ENCODE measurements at regions of chr5 and their contacts with region 1.

Region 1: GRCh38 chr5:64784451-64785025 is 15.8 kb downstream of the CWC27 start:
- DNase-seq: no peak
- H3K4me3 ChIP-seq: no peak overlapping the region
- H3K27ac ChIP-seq: no peak overlapping the region
- H3K4me1 ChIP-seq: peaks cover 0 to 6% (median 0%) of the 10 kb centered on the region in 4 donors
- H3K27me3 ChIP-seq: no peaks in the 10 kb centered on the region
- CTCF ChIP-seq: peak; percentile 72 to 78 (median 77)
- EP300 ChIP-seq: no peak
- POLR2A ChIP-seq: no peak

Region 2: DNA sequence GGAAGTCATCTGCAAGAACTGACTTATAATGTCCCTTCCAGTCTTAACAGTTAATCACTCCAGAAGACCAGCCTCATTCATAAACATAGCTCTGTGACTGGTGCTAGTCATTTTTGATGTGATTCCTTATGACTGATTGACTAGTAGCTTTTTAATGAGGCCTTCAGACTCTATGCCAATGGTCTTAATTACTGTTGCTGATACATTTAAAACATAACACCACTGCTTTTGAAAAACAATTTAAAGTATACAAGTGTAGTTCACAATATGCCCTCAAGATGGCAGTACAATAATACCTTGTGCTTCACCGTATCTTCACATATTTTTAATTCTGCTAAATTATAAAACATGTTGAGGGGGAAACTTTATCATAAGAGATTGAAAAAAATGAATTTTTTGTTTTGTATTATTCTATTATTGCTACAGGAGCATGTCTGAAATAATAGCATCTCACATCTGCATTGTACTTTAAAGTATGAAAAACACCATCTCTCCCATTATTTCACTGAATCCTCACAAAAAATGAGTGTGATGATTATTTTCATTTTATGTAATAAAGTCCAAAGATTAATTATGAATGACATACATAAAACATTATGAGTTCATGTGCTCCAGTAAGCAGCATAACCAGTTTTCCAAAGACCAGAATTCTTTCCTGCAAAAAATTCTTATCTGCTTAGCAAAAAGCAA is 149.4 kb before region 1 on chr5:
- intact Hi-C with region 1: loop called (anchors 2 kb)
- DNase-seq: no peak
- H3K4me3 ChIP-seq: no peak overlapping the region
- H3K27ac ChIP-seq: no peak overlapping the region
- H3K4me1 ChIP-seq: no peaks in the 10 kb centered on the region
- H3K27me3 ChIP-seq: no peaks in the 10 kb centered on the region
- CTCF ChIP-seq: peak; percentile 68 to 81 (median 79)
- EP300 ChIP-seq: no peak
- POLR2A ChIP-seq: no peak